Thyroid gland (tissue), 4 donors: ENCODE measurements at regions of chr6 and their contacts with region 1.

Region 1: GRCh38 chr6:31197559-31198305 is 27.2 kb upstream of the POU5F1 start:
- DNase-seq: peak; percentile 92 to 93
- H3K4me3 ChIP-seq: peak overlapping the region; percentile 62 to 96 (median 65)
- H3K27ac ChIP-seq: peak overlapping the region; percentile 90 to 97 (median 95)
- H3K4me1 ChIP-seq: peaks cover 0 to 23% of the 10 kb centered on the region in 2 donors
- H3K27me3 ChIP-seq: no peaks in the 10 kb centered on the region
- CTCF ChIP-seq: no peak
- POLR2A ChIP-seq: peak; percentile 49 to 87

Region 2: GRCh38 chr6:31139599-31139998 is 58.1 kb before region 1 on chr6:
- intact Hi-C with region 1: loop called (anchors 5 kb)
- DNase-seq: no peak
- H3K4me3 ChIP-seq: no peak overlapping the region
- H3K27ac ChIP-seq: no peak overlapping the region
- H3K4me1 ChIP-seq: peaks cover 0 to 5% of the 10 kb centered on the region in 2 donors
- H3K27me3 ChIP-seq: no peaks in the 10 kb centered on the region
- CTCF ChIP-seq: no peak
- POLR2A ChIP-seq: no peak

Region 3: DNA sequence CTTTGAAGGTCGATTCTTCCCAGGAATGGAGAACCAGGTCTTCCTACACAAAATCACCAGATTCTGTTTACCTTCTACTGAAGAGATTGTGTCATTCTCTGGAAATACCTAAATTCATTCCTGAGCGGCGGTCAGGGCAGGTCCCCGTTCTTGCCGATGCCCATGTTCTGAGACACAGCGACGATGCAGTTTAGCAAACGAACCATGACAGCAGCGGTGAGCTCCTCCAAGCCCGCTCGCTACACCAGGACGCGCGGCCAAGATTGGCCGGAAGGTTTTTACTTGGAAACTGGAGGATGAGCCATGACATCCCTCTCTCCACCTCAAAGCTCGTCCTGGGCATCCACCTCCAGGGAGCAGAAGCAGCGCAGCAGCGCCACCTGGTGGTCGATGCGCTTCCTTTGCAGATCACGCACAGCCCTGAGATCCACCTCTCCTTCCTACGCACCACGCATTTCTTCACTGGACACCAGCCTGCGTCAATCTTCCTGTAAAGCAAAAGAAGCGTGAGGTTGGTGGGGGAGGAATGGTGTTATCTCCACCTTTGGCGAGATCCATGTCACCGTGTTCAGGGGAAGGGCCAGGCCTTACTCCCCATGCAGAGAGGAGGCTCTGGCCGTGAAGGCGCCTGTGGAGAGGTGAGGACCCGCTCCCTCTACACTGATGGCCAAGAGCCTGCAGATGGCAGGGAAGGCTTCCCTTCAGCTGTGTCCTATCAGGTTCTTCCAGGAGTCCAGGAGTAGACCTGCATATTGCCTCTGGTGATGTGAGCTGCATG is 169.2 kb after region 1 on chr6:
- intact Hi-C with region 1: loop called (anchors 5 kb)
- DNase-seq: peak; percentile 79 to 85
- H3K4me3 ChIP-seq: no peak overlapping the region
- H3K27ac ChIP-seq: no peak overlapping the region
- H3K4me1 ChIP-seq: no peaks in the 10 kb centered on the region
- H3K27me3 ChIP-seq: no peaks in the 10 kb centered on the region
- CTCF ChIP-seq: peak; percentile 87 to 93 (median 90)
- POLR2A ChIP-seq: no peak